HepG2 (cell line): ENCODE measurements at regions of chr12 and their contacts with region 1.

Region 1: DNA sequence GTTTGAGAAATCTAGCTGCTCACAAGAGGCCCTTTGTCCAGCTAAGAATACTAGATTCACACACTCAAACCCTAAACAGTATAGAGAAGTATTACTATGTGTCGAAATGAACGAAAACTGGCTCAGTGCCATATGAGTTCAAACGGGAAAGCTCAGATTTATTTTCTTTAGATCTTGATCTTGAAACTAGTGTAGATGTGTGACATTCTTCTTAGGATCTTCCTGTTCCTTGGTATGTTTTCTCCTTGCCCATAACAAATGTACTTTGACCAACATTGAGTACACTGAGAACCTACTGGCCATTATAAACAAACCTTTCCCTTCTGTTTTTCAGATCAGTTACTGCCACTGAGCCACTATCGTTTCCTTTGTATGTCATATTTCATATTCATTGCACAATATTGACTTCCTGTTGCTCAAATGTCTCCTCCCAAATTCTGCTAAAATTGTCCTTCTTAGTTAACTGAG is 21.3 kb downstream of the MYBPC1 start:
- DNase-seq: peak; percentile 86
- ATAC-seq: peak; percentile 68
- H3K4me3 ChIP-seq: peak overlapping the region in 2 of 3 experiments; percentile 26 to 35; a peak in 4 of 6 replicates
- H3K27ac ChIP-seq: peak overlapping the region; percentile 74
- H3K4me1 ChIP-seq: peaks cover 78% of the 10 kb centered on the region
- H3K27me3 ChIP-seq: no peaks in the 10 kb centered on the region
- CTCF ChIP-seq: no peak
- EP300 ChIP-seq: peak in 1 of 2 experiments; percentile 76; a peak in 2 of 4 replicates
- POLR2A ChIP-seq: no peak
- RAD21 ChIP-seq: no peak

Region 2: DNA sequence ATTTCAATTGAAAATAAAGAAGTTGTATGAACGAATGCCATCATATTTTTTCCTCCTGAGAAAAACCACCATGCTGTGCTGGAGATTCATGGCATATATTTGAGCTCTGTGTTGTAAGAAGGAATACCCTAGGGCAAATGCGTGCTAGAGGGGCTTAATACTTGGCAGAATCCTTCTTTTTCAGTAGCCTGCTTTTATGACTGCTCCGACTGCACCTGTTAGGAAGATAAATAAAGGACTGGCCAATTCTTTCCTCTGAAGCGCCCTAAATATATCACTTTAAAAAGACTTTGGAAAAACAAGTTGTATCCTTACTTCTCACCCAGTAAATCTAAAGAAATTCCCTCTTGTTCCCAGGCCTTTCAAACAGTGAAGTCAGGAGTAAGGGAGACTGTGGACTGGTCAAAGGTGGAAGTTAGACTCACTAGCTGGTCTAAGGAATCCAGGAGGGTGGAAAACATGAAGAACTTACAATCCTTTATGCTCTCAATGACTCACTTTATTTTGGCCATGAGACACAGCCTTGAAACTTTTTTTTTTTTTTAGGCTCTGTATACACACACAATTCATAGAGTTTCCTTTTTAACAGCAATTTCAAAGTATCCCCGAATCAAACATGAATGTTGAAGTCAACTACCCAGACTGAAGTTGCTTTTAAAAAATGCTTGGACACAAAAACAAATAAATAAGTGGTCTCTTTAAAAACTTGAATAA is 16.1 kb before region 1 on chr12:
- CTCF ChIA-PET with region 1: no interaction called
- POLR2A ChIA-PET with region 1: interaction called, 35 read pairs
- in situ Hi-C with region 1: no loop called
- intact Hi-C with region 1: no loop called
- DNase-seq: peak; percentile 90
- ATAC-seq: peak; percentile 86
- H3K4me3 ChIP-seq: peak overlapping the region; percentile 4 to 43 (median 42); a peak in 5 of 6 replicates
- H3K27ac ChIP-seq: peak overlapping the region; percentile 91
- H3K4me1 ChIP-seq: peaks cover 71% of the 10 kb centered on the region
- H3K27me3 ChIP-seq: no peaks in the 10 kb centered on the region
- CTCF ChIP-seq: no peak
- EP300 ChIP-seq: peak in 1 of 2 experiments; percentile 83; a peak in 2 of 4 replicates
- POLR2A ChIP-seq: peak in 1 of 2 experiments; percentile 51; a peak in 1 of 4 replicates
- RAD21 ChIP-seq: no peak

Region 3: GRCh38 chr12:101653503-101653902 is 37.4 kb after region 1 on chr12:
- CTCF ChIA-PET with region 1: no interaction called
- POLR2A ChIA-PET with region 1: interaction called, 3 read pairs
- in situ Hi-C with region 1: no loop called
- intact Hi-C with region 1: loop called (anchors 5 kb)
- DNase-seq: peak; percentile 97
- ATAC-seq: peak; percentile 100
- H3K4me3 ChIP-seq: no peak overlapping the region
- H3K27ac ChIP-seq: peak overlapping the region; percentile 84
- H3K4me1 ChIP-seq: peaks cover 53% of the 10 kb centered on the region
- H3K27me3 ChIP-seq: no peaks in the 10 kb centered on the region
- CTCF ChIP-seq: no peak
- EP300 ChIP-seq: peak; percentile 22 to 83; a peak in 2 of 4 replicates
- POLR2A ChIP-seq: no peak
- RAD21 ChIP-seq: 0 out of 2 replicates have a peak, but pooled peaks have one; percentile 10

Region 4: DNA sequence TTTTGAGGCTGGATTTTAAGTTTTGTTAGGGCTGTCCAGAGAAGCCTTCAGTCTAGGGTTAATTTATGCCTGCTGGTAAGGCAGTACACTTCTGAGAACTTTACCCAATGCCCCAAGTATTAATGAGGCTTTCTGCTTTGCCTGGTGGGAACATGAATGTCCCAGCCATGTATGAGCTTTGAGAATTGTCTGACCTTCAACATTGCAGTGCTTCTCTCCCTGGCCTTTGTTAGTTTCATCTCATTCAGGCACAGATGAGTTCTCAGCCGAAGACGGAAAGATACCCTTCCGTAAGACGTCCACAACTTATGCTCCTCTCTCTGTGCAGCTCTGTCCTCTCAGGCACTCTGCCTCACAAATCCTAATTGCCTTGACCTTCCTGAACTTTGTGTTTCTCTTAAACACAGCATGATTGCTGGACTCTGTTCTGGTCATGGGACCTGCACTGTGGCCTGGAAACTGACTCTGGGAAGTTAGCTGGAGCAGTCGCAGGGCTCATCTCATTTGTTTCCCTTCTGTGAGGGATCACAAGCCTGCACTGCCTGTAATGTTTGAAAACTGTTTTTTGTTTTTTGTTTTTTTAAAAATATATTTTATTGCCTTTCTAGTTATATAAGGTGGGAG is 97.1 kb after region 1 on chr12:
- CTCF ChIA-PET with region 1: no interaction called
- POLR2A ChIA-PET with region 1: interaction called, 3 read pairs
- in situ Hi-C with region 1: no loop called
- intact Hi-C with region 1: loop called (anchors 5 kb)
- DNase-seq: peak; percentile 85
- ATAC-seq: peak; percentile 97
- H3K4me3 ChIP-seq: peak overlapping the region; percentile 25 to 51 (median 35)
- H3K27ac ChIP-seq: peak overlapping the region; percentile 70
- H3K4me1 ChIP-seq: peaks cover 62% of the 10 kb centered on the region
- H3K27me3 ChIP-seq: no peaks in the 10 kb centered on the region; a peak in 1 of 5 replicates
- CTCF ChIP-seq: peak; percentile 20; the same call in 1 of the 2 replicates
- EP300 ChIP-seq: peak in 1 of 2 experiments; percentile 77; a peak in 2 of 4 replicates
- POLR2A ChIP-seq: peak in 1 of 2 experiments; percentile 26; a peak in 1 of 4 replicates
- RAD21 ChIP-seq: no peak